Activated CD4-positive, alpha-beta memory T cell treated with anti-CD3 and anti-CD28 coated beads for 36 hours (primary cell): ENCODE measurements at regions of chr19 and their contacts with region 1.

Region 1: GRCh38 chr19:24033301-24033962 is 53.6 kb upstream of the ZNF254 start:
- DNase-seq: peak; percentile 91
- H3K4me3 Mint-ChIP-seq: peak overlapping the region; percentile 99
- H3K27ac Mint-ChIP-seq: peak overlapping the region; percentile 97
- H3K4me1 Mint-ChIP-seq: peaks cover 52% of the 10 kb centered on the region
- H3K27me3 Mint-ChIP-seq: no peaks in the 10 kb centered on the region

Region 2: GRCh38 chr19:23273590-23274413 is 759.6 kb before region 1 on chr19:
- CTCF ChIA-PET with region 1: no interaction called
- POLR2A ChIA-PET with region 1: no interaction called
- intact Hi-C with region 1: loop called (anchors 1 kb)
- DNase-seq: peak; percentile 95
- H3K4me3 Mint-ChIP-seq: peak overlapping the region; percentile 91
- H3K27ac Mint-ChIP-seq: peak overlapping the region; percentile 89
- H3K4me1 Mint-ChIP-seq: peaks cover 20% of the 10 kb centered on the region
- H3K27me3 Mint-ChIP-seq: no peaks in the 10 kb centered on the region

Region 3: GRCh38 chr19:23686621-23687423 is 346.6 kb before region 1 on chr19 and contains the start of gene ZNF675:
- CTCF ChIA-PET with region 1: no interaction called
- POLR2A ChIA-PET with region 1: no interaction called
- intact Hi-C with region 1: loop called (anchors 2 kb)
- DNase-seq: peak; percentile 93
- H3K4me3 Mint-ChIP-seq: peak within 1 kb of the TSS; percentile 97
- H3K27ac Mint-ChIP-seq: peak within 1 kb of the TSS; percentile 97
- H3K4me1 Mint-ChIP-seq: peaks cover 38% of the 10 kb centered on the region
- H3K27me3 Mint-ChIP-seq: no peaks in the 10 kb centered on the region
- total RNA-seq, gene ZNF675: 17.1 to 21.0 TPM

Region 4: GRCh38 chr19:24054549-24054935 is 21.1 kb after region 1 on chr19:
- CTCF ChIA-PET with region 1: no interaction called
- POLR2A ChIA-PET with region 1: interaction called, 3 read pairs
- intact Hi-C with region 1: loop called (anchors 1 kb)
- DNase-seq: peak; percentile 28
- H3K4me3 Mint-ChIP-seq: no peak overlapping the region
- H3K27ac Mint-ChIP-seq: peak overlapping the region; percentile 75
- H3K4me1 Mint-ChIP-seq: peaks cover 19% of the 10 kb centered on the region
- H3K27me3 Mint-ChIP-seq: no peaks in the 10 kb centered on the region

Region 5: DNA sequence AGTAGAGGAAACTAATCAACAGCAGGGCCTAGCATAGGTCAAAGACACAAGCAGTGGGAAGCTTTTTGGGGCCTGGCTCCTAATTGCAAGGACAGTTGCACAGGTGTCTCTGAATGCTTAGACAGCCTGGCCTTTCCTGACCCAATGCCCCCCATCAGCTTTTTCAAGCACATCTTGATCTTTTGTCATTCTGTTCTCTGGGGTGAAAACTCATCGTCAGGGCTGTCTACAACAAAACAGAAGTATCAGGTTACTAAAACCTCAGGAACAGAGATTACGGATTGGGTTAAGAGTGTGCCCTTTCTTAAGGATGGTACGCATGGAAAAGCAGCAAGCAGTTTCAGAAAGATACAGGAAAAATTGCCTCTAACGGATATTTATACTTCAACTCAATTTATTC is 45.2 kb after region 1 on chr19:
- CTCF ChIA-PET with region 1: no interaction called
- POLR2A ChIA-PET with region 1: no interaction called
- intact Hi-C with region 1: no loop called
- DNase-seq: no peak
- H3K4me3 Mint-ChIP-seq: no peak overlapping the region
- H3K27ac Mint-ChIP-seq: no peak overlapping the region
- H3K4me1 Mint-ChIP-seq: peaks cover 6% of the 10 kb centered on the region
- H3K27me3 Mint-ChIP-seq: no peaks in the 10 kb centered on the region